Brain microvascular endothelial cell (primary cell): ENCODE measurements at regions of chr22 and their contacts with region 1.

Region 1: DNA sequence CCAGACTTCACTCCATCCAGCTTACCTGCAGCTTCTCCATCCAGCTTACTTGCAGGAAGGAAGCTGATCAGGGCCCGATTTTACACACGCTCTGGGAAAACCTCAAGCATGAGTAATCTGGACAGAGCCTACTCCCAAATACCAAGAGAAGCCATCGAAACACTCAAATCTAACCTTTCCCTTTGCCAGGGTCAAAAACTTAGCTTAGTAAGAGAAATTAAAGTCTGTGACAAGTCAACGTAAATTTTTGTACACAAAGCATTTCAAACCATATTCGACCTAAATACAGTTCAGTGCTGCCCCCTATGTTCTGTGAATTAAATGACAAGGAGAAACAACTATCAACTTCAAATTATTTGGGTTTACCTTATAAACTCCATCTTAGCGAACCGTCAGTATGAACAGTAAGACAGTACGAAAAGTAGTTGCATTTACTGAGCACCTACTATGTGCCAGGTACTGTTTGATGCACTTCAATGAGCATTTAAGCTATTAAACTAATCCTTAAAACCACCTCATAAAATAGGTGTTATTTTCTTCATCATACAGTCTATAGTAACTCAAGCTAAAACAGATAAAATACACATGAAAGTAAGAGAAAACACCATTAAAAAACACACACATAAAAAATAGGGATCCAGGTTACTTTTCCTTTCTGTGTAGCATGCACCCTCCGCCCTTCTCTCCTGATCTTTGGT is 36.9 kb downstream of the ARFGAP3 start:
- DNase-seq: peak; percentile 40
- H3K4me3 ChIP-seq: no peak overlapping the region
- H3K27ac ChIP-seq: no peak overlapping the region
- H3K27me3 ChIP-seq: no peaks in the 10 kb centered on the region
- CTCF ChIP-seq: peak; percentile 47

Region 2: DNA sequence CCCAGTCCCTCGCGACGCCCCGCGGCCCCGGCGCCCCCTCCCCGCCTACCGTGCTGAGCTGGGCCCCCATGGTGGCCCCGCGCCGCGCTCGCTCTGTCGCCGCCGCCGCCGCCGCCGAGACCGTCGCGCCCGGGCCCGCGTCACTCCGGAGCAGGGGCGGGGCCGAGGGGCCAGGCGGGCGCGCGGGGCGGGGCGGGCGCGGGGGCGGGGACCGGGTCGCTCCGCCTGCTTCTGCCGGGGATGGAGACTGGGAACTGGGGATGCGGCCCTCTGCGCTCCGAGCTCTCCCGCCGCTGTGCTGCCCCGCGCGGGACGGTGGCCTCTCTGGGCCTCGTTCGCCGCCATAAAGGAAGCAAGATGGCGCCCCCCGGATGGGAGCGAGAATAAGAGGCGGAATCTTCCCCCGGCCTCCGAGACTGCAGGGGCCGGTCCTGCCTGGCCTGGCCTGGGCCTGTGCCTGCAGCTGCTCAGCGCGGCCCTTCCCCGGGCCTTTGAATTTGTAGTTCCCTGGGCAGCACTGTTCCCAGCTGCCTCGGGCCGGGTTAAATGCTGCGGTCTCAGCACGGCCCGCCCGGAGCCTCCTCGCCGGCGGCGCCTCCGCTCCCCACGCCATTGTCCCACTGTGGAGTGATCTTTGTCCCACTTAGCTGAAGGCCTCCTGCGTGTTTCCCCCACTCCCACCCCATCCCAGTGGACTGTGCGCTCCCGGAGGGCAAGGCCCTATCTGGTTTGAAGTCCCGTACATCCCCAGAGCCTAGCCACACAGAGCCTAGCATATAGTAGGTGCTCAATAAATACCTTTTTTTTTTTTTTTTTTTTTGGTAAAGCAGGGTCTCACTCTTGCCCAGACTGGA is 170.7 kb before region 1 on chr22 and contains the start of gene CYB5R3:
- in situ Hi-C with region 1: loop called (anchors 25 kb)
- DNase-seq: peak; percentile 67
- H3K4me3 ChIP-seq: peak within 1 kb of the TSS; percentile 89
- H3K27ac ChIP-seq: peak within 1 kb of the TSS; percentile 61
- H3K27me3 ChIP-seq: no peaks in the 10 kb centered on the region
- CTCF ChIP-seq: no peak

Region 3: GRCh38 chr22:42933481-42934091 is 113.4 kb after region 1 on chr22:
- in situ Hi-C with region 1: no loop called
- DNase-seq: peak; percentile 93
- H3K4me3 ChIP-seq: peak overlapping the region; percentile 30
- H3K27ac ChIP-seq: peak overlapping the region; percentile 97
- H3K27me3 ChIP-seq: no peaks in the 10 kb centered on the region
- CTCF ChIP-seq: no peak

Region 4: DNA sequence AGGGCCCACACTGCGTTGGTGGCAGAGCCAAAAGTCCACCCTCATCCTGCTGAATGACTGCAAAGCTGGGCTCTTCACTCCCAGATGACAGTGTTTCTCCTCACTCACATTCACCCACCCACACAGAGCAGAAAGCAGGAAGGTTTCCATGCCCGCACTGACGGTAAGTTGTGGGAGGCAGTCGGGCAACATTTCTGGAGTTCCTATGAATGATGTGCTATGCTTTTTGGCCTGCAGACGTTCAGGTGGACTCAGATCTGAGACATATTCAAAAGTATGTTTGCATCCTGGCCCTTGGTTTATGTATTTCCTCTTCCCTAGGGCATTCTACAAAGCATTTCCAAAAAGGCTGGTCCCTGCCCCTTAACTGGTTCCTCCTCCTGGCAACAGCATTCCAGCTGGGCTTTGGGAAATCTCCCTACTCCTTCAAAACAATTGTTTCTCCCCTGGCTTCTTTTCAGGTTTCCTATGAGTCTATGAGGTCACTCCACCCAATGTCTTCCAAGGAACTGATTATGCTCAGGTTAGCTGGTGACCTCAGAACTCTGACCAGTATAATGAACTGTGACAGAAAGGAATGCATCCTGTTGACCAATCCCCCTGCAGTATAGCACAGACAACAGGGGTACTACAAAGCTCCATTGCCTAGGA is 158.4 kb after region 1 on chr22:
- in situ Hi-C with region 1: no loop called
- DNase-seq: no peak
- H3K4me3 ChIP-seq: no peak overlapping the region
- H3K27ac ChIP-seq: no peak overlapping the region
- H3K27me3 ChIP-seq: no peaks in the 10 kb centered on the region
- CTCF ChIP-seq: no peak